IMR-90 (cell line): ENCODE measurements at regions of chr6 and their contacts with region 1.

Region 1: DNA sequence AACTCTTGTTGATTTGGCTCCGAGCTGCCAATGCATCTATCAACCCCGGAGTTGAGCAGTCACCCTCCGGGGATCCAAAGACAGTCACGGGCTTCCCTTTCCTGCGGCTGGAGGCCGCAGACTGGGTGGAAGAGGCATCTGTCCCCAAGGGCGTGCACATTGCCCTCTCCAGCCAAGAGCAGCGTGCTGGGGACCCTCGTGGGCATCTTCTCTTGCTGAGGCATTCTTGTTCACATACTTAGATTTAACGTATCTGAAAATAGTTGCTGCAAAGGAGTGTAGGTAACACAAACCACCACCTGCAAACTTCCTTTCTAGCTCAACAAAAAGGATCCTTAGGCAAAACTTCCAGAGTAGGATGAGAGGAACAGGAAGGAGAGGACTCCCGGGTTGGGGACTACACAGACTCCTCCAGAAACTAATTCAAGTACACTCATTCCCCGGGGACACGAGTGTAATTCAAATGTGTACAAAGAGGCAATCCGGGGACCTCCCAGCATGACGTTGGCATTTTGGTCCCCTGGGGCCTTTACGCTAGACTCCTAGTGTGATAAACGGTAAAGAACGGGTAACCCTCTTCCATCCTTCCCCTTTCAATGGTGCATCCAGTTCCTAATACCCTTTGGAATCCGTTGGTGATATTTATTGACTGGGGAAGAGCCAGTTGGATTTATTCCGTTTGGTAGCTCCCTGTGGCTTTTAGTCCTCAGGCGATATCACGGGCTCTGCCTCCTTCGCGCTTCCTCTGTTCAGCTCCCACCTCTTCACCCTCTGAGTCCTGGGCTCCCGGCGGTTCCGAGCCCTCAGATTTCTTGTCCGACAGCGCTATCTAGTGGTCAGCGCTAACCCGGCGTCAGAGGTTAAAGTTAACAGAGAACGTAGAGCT is 2.7 kb upstream of the COL12A1 start:
- DNase-seq: peak; percentile 77
- ATAC-seq: peak; percentile 39
- H3K4me3 ChIP-seq: no peak overlapping the region
- H3K27ac ChIP-seq: peak overlapping the region; percentile 50; the same call in 1 of the 2 replicates
- H3K4me1 ChIP-seq: peaks cover 15% of the 10 kb centered on the region
- H3K27me3 ChIP-seq: no peaks in the 10 kb centered on the region
- CTCF ChIP-seq: peak; percentile 95
- POLR2A ChIP-seq: peak; percentile 46; the same call in 1 of the 2 replicates
- RAD21 ChIP-seq: peak; percentile 96

Region 2: GRCh38 chr6:73732845-73733675 is 1475.5 kb before region 1 on chr6:
- CTCF ChIA-PET with region 1: interaction called, 7 read pairs
- POLR2A ChIA-PET with region 1: no interaction called
- dilution Hi-C with region 1: no loop called
- in situ Hi-C with region 1: loop called (anchors 5 kb)
- intact Hi-C with region 1: no loop called
- DNase-seq: peak; percentile 78
- ATAC-seq: peak; percentile 99
- H3K4me3 ChIP-seq: no peak overlapping the region
- H3K27ac ChIP-seq: no peak overlapping the region
- H3K4me1 ChIP-seq: no peaks in the 10 kb centered on the region
- H3K27me3 ChIP-seq: no peaks in the 10 kb centered on the region
- CTCF ChIP-seq: peak; percentile 88
- POLR2A ChIP-seq: no peak; the same call in 1 of the 2 replicates
- RAD21 ChIP-seq: peak; percentile 91

Region 3: DNA sequence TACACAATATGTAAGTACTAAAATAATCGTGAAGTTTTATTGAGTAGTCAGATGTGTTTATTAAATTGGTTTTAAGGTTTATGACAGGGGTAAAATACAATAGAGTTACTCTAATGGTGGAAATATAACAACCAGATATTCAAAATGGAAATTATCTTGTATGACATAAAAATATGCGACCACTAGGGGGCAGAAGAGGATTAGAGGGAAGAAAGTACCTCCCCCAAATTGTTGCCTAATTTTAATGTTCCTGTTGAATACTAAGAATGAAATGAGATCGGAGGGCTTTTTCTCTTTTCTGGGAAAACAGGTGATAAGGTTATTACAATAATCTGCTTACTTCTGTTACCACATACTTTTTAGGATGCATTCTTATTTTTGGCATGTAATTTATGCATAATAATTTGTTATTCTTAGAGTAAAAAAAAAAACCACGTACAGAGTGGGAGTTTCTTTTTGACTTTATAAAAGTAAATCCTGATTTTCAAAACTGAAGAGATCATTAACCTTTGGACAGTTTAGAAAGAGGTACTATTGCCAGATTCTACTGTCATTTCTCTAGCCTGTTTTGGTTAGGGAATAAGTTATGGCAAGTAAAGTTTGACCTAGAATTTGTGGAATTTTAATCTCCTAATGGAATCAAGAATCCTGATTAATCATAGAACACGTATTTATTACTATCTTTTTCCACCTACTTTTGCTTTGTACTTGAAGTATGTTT is 1353.4 kb before region 1 on chr6:
- CTCF ChIA-PET with region 1: interaction called, 3 read pairs
- POLR2A ChIA-PET with region 1: no interaction called
- dilution Hi-C with region 1: no loop called
- in situ Hi-C with region 1: loop called (anchors 10 kb)
- intact Hi-C with region 1: loop called (anchors 1 kb)
- DNase-seq: peak; percentile 73
- ATAC-seq: peak; percentile 53; the same call in 1 of the 2 replicates
- H3K4me3 ChIP-seq: no peak overlapping the region
- H3K27ac ChIP-seq: no peak overlapping the region
- H3K4me1 ChIP-seq: peaks cover 4% of the 10 kb centered on the region
- H3K27me3 ChIP-seq: no peaks in the 10 kb centered on the region
- CTCF ChIP-seq: peak; percentile 86
- POLR2A ChIP-seq: no peak
- RAD21 ChIP-seq: peak; percentile 78

Region 4: DNA sequence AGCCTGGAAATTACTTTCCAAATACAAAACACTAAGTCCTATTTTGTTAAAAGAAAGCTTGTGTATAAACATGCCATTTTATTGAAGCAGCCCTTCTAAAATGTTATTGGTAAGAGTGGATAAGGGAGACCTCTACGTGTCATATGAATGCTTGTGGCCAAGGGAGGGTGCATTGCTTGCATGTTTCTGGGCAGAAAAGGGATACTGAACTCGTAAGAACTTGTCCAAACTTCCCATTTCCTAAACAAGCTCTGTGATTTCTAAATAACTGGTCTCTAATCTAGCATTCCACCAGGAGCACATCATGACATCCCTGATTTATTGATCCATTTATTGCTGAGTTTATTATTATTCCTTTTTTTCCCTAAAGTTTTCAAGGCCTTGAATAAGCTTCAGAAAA is 1038.4 kb before region 1 on chr6:
- CTCF ChIA-PET with region 1: interaction called, 4 read pairs
- POLR2A ChIA-PET with region 1: interaction called, 4 read pairs
- dilution Hi-C with region 1: no loop called
- in situ Hi-C with region 1: no loop called
- intact Hi-C with region 1: loop called (anchors 2 kb)
- DNase-seq: peak; percentile 99
- ATAC-seq: peak; percentile 92
- H3K4me3 ChIP-seq: no peak overlapping the region
- H3K27ac ChIP-seq: peak overlapping the region; percentile 99; the same call in 1 of the 2 replicates
- H3K4me1 ChIP-seq: peaks cover 8% of the 10 kb centered on the region; the same call in 1 of the 2 replicates
- H3K27me3 ChIP-seq: no peaks in the 10 kb centered on the region
- CTCF ChIP-seq: no peak
- POLR2A ChIP-seq: no peak
- RAD21 ChIP-seq: no peak

Region 5: GRCh38 chr6:74574794-74575193 is 633.7 kb before region 1 on chr6:
- CTCF ChIA-PET with region 1: interaction called, 3 read pairs
- POLR2A ChIA-PET with region 1: no interaction called
- dilution Hi-C with region 1: no loop called
- in situ Hi-C with region 1: no loop called
- intact Hi-C with region 1: loop called (anchors 5 kb)
- DNase-seq: peak; percentile 58
- ATAC-seq: peak; percentile 43; the same call in 1 of the 2 replicates
- H3K4me3 ChIP-seq: no peak overlapping the region
- H3K27ac ChIP-seq: no peak overlapping the region
- H3K4me1 ChIP-seq: peaks cover 10% of the 10 kb centered on the region
- H3K27me3 ChIP-seq: no peaks in the 10 kb centered on the region
- CTCF ChIP-seq: peak; percentile 56
- POLR2A ChIP-seq: no peak
- RAD21 ChIP-seq: peak; percentile 63

Region 6: DNA sequence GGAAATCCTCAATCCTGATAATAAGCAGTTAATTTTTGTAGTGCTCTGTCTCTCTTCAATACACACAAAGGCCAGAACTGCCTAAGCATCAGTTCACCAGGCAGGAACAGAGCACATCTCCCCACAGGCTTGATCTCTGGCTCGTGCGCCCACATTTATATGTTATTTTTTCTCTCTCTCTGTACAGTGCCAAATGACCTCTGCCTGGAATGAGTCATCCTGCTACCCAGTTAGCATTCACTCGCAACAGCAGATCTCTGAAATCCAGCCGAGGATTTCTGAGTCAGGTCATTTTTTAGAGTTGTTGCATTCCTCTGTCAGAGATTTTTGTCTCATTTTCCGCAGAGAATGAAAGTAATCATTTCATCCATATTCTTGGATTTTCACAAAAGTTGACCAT is 109.8 kb before region 1 on chr6:
- CTCF ChIA-PET with region 1: interaction called, 5 read pairs
- POLR2A ChIA-PET with region 1: no interaction called
- dilution Hi-C with region 1: no loop called
- in situ Hi-C with region 1: no loop called
- intact Hi-C with region 1: loop called (anchors 2 kb)
- DNase-seq: peak; percentile 98
- ATAC-seq: peak; percentile 73
- H3K4me3 ChIP-seq: no peak overlapping the region
- H3K27ac ChIP-seq: peak overlapping the region; percentile 78; the same call in 1 of the 2 replicates
- H3K4me1 ChIP-seq: peaks cover 27% of the 10 kb centered on the region
- H3K27me3 ChIP-seq: no peaks in the 10 kb centered on the region
- CTCF ChIP-seq: no peak
- POLR2A ChIP-seq: no peak
- RAD21 ChIP-seq: no peak